ENCODE measurements at regions of chr16 and their contacts with region 1.

Region 1: GRCh38 chr16:2142942-2143877 is 5.2 kb upstream of the RAB26 start:
- DNase-seq: no peak
- H3K4me3 ChIP-seq: no peak overlapping the region
- H3K27ac ChIP-seq: no peak overlapping the region
- H3K4me1 ChIP-seq: peaks cover 13 to 18% (median 15%) of the 10 kb centered on the region in 4 donors
- H3K27me3 ChIP-seq: no peaks in the 10 kb centered on the region
- CTCF ChIP-seq: no peak
- EP300 ChIP-seq: no peak
- POLR2A ChIP-seq: no peak

Region 2: GRCh38 chr16:2023098-2023925 is 119.9 kb before region 1 on chr16:
- intact Hi-C with region 1: loop called (anchors 1 kb)
- DNase-seq: peak; percentile 98
- H3K4me3 ChIP-seq: peak overlapping the region; percentile 33 to 50 (median 44)
- H3K27ac ChIP-seq: peak overlapping the region; percentile 63 to 74 (median 70)
- H3K4me1 ChIP-seq: peaks cover 47 to 72% (median 67%) of the 10 kb centered on the region in 4 donors
- H3K27me3 ChIP-seq: peaks cover 0 to 43% (median 25%) of the 10 kb centered on the region in 4 donors
- CTCF ChIP-seq: peak; percentile 99
- EP300 ChIP-seq: no peak
- POLR2A ChIP-seq: no peak

Region 3: GRCh38 chr16:2121853-2122252 is 21.4 kb before region 1 on chr16:
- intact Hi-C with region 1: loop called (anchors 2 kb)
- DNase-seq: no peak
- H3K4me3 ChIP-seq: peak overlapping the region; percentile 30 to 47 (median 38)
- H3K27ac ChIP-seq: peak overlapping the region; percentile 96 to 98 (median 97)
- H3K4me1 ChIP-seq: peaks cover 63 to 98% (median 93%) of the 10 kb centered on the region in 4 donors
- H3K27me3 ChIP-seq: no peaks in the 10 kb centered on the region
- CTCF ChIP-seq: no peak
- EP300 ChIP-seq: no peak
- POLR2A ChIP-seq: no peak